ENCODE measurements at regions of chr1 and their contacts with region 1.

Region 1: DNA sequence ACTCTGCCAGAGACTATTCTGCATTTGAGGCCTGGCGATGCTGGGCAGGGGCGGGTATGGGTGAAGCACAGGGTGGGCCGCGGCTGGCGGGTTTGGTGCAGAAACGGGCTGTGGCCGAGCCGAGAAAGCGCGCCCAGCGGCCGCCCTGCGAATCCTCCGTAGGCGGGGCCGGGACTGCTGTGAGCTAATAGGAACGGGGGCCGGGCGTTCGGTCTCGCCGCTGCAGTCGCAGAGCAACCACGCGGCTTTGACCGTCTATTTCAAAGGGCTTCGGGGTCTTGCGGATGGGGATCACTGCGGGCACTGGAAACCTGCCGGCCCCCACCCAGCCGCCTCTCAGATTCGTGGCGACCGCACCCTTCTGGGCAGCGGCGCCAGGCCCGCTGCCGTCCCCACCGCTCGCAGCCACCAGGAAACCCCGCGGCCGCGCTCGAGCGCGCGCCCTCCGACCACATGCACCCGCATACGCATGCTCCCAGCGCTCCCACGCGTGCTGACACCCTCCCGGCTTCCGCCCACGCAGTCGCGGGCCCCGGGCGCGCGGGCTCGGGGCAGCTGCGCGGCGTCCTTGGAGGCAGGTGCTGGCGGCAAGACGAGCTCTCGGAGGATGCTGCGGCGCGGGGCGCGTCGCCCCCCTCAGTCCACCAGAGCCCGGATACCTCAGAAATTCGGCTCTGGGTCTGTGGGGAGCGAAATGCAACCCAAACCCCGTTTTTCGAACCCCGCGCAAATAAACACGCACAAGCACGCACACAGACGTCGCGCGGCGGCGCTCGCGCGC is 32.6 kb downstream of the DNTTIP2 start:
- DNase-seq: peak; percentile 97

Region 2: GRCh38 chr1:93437976-93438605 is 408.3 kb before region 1 on chr1:
- intact Hi-C with region 1: loop called in 1 of 2 experiments (anchors 10 kb)
- DNase-seq: no peak

Region 3: DNA sequence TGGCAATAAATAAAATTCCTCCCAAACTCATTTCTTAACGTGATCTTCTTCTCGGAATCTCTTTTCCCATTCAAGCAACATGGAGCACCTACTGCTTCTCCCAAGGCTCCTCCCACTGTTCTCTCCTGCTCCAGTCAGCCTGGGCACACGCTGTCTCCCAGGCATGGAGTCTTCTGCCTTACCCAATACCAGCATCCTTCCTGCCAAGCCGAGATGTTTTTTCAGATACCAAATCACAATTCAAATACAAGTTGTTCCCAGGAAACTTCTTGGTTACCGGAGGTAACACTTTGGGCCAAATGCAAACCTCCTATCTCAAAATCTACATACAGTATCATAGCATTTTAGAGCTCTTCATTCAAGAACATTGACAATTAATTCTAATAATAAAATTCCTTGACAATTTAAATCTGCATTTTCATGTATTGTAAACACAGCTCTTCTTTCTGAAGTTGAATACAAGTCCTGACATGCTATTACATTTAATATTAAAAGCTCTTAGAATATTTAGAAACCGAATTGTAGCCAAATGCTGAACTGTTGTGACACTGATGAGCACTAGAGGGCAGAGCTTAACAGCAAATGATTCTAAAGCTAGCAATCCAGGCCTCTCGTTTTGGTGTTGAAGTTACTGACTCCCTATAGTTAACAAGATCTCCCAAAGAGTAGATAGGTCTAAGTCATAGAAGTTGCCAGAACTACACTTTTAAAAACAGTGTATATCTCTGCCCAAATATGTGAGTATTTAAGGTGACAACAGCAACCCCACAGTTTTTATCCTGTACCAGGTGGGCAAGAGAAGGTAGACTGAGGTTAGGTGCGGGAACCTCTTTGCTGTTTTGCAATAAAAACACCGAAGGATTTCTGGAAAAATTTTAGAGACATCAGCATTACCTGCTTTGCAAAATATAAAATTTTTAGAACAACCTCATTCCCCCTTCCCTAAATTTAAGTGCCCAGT is 217.0 kb before region 1 on chr1:
- intact Hi-C with region 1: loop called in 1 of 2 experiments (anchors 10 kb)
- DNase-seq: no peak

Region 4: DNA sequence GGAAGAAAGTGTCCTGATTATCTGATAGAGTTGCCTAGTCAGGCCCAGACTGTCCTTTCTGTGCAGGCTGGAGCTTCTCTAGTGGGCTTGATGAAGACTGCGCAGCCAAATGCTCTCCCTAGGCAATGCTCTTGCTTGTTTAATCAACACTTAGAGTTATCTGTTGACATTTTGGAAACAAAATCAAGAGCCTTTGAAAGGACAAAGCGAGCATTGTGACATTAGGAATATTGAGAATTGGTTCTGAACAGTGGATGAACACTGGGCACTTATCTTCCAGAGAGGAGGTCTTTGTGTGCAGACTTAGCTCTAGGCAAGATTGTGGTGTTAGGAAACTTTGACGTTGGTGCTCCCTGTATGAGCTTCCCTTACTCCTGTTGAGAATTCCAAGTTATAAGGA is 61.9 kb before region 1 on chr1:
- intact Hi-C with region 1: no loop called
- DNase-seq: no peak

Region 5: DNA sequence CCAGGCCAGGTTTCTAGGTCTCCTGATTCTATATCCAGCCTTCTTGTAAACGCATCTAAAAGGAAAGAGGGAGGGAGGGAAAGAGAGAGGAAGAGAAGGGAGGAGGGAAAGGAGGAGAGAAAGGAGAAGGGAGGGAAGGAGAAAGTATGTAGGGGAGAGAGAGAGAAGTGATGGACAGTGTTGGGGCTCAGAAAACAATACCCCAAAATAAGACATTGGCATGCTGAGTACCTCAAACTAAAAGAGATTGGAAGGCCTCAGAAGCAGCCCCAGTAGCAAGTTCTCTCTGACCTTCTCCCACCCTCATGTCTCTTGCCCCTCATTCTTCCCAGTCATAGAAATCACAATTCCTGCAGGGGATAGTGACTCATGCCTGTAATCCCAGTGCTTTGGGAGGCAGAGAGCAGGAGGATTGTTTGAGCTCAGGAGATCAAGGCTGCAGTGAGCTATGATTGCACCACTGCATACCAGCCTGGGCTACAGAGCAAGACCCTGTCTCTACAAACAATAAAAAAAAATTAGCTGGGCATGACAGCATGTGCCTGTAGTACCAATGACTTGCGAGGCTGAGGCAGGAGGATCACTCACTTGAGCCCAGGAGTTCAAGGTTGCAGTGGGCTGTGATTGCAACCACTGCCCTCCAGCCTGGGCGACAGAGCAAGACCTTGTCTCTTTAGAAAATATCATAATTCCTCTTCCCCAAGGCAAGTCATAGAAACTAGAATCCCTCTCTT is 18.6 kb before region 1 on chr1:
- intact Hi-C with region 1: no loop called
- DNase-seq: no peak